Lower leg skin (tissue), 4 donors: ENCODE measurements at regions of chr6 and their contacts with region 1.

Region 1: DNA sequence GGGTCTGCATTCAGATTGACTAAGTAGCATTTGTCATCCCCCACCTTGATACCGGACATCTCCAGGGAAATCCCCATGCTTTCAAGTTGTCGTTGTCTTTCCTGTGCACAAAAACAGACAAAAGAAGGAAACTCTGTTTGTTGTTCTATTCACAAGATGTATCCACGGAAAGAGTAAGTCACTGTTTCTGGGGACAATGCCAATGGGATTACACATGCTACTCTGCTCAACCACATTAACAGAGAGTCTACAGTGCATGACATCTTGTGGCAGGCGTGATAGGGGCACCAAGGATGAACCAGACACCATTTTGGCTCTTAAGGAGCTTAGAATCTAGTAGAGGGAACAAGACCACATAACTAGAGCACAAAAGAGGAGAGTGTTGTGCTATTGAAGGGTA is 124.4 kb upstream of the NUP153 start:
- DNase-seq: peak in 1 of 2 donors; percentile 44
- H3K4me3 ChIP-seq: no peak overlapping the region
- CTCF ChIP-seq: no peak
- POLR2A ChIP-seq: no peak

Region 2: GRCh38 chr6:17714879-17715851 is 116.0 kb before region 1 on chr6:
- intact Hi-C with region 1: no loop called
- DNase-seq: no peak
- H3K4me3 ChIP-seq: no peak overlapping the region
- CTCF ChIP-seq: no peak
- POLR2A ChIP-seq: no peak

Region 3: DNA sequence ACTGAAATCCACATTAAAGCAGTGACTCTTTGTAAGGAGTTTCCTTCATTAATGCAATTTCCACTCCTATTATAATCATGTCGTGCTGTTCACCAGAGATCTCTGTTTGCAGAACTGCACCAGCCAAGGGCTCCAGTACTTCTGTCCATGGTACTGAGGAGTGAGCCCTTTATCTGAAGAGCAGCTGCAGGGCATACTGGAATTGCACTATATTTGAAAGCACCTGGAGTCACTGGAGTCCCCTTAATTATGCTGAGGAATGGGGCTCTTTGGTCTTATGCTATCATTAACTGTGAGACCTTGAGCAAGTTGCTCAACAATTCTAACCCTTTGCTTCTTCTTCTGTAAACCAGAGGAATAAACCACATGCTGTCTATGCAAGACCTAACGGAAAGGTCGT is 62.7 kb before region 1 on chr6:
- intact Hi-C with region 1: no loop called
- DNase-seq: no peak
- H3K4me3 ChIP-seq: no peak overlapping the region
- CTCF ChIP-seq: no peak
- POLR2A ChIP-seq: no peak

Region 4: DNA sequence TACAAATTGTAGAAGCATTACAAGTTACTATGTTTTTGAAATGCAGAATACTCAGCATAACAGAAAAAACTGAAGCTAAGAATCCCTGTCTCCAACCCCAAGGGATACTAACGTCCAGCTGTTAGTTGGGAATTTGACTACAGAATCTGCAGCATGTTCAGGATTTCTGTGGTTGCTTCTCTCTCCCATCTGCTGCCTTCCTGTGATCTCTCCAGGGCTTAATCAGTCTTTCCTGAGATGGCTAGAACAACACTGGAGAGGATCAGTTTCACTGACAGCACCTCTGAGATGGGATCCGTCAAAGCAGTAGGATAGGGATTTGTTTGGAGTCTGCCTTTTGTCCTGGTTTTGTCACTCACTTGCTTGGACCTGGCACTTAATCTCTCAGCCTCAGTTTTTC is 51.1 kb before region 1 on chr6:
- intact Hi-C with region 1: no loop called
- DNase-seq: no peak
- H3K4me3 ChIP-seq: no peak overlapping the region
- CTCF ChIP-seq: no peak
- POLR2A ChIP-seq: no peak

Region 5: GRCh38 chr6:17987576-17988421 is 156.7 kb after region 1 on chr6 and contains the start of gene KIF13A:
- intact Hi-C with region 1: loop called (anchors 10 kb)
- DNase-seq: peak; percentile 59 to 91
- H3K4me3 ChIP-seq: peak within 1 kb of the TSS; percentile 56
- CTCF ChIP-seq: no peak
- POLR2A ChIP-seq: no peak
- total RNA-seq, gene KIF13A: 54.4 to 88.5 (median 60.6) TPM